Right ventricle myocardium superior (tissue), 1 donor: ENCODE measurements at regions of chr12 and their contacts with region 1.

Region 1: DNA sequence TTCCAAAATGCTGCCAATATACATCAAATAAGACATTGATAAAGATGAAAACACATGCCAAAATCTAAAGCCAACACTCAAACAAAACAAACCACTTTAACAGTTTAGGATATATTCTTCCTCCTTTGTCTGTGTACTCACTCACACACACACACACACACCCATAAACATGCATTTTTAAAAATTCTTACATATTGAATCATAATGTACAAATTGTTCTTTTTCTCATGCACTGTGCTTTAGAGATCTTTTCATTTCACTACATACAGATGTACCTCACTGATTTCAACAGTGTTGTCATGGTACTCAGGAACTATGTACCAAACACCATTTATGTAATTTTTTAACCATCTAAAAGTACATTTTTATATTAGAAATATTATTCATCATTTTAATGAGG is 9.5 kb upstream of the RERG start:
- DNase-seq: no peak
- ATAC-seq: no peak

Region 2: DNA sequence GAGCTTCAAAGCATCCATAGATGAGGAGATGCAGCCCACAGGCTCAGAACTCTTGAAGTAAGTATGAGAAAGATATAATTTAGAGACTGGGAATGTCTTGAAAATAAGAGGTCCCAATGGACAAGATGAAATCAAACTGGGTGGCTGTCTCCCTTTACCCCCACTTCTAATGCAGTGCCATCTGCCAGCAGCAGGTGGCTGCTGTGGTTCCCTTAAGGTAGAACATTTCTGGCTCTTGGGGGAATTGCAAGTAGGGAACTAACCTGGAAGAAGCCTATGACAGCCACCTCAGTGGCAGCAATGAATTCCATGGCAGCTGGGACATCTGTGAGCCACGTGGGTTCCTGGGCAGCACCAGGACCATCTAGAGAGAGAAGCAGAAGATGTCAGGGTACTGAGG is 293.1 kb before region 1 on chr12:
- intact Hi-C with region 1: no loop called
- DNase-seq: no peak
- ATAC-seq: no peak

Region 3: DNA sequence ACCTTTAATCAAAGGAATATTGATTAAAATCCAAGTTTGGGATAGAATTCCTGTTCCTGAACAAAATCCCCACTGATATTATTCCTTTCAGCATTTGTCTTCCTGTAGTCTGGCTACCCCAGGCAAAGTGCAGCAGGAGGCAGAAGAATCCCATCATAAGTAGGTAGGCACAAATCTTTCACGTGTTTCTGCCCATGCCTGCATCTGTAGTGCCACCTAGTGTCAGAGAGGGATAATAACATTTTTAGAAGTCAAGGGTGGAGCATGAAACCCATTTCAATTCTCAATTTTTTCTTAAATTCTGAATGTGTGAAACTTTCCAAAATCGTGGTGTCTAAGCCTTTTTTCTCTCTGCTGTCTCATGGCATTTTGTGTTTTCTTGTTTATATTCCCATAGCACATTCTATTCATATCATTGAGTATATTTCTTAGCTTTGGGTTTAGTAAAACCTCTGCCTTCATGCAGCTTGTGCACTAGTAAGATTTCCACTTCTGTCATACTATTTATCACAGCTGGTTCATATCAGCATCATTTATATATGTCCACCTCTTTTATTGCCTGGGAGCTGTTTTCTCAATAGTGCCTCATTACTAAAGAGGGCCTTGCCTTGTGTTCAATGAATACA is 38.3 kb after region 1 on chr12:
- intact Hi-C with region 1: loop called (anchors 5 kb)
- DNase-seq: no peak
- ATAC-seq: peak; percentile 71

Region 4: DNA sequence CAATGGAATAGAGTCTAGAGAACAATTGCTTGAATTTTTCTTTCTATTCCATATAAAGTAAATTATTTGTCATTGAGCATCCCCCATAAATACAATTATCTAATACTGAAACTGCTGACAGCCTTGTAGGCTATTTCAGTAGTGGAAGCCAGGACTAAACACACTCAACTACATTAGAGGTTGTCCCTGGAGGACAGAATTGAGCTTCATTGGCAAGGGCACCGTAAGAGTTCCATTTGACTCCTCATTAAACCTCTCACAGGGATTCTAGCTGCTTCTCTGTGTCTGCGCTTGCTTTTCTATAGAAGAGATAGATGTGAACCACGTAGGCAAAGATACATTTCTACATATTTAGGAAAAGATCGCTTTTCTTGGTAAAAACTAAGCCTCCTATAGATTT is 88.1 kb after region 1 on chr12:
- intact Hi-C with region 1: no loop called
- DNase-seq: no peak
- ATAC-seq: no peak